Calu3 (cell line): ENCODE measurements at regions of chr15 and their contacts with region 1.

Region 1: GRCh38 chr15:87896936-87897335 is 359.6 kb downstream of the NTRK3 start:
- DNase-seq: no peak
- H3K4me3 Mint-ChIP-seq: no peak overlapping the region
- H3K27ac Mint-ChIP-seq: no peak overlapping the region
- H3K4me1 Mint-ChIP-seq: no peaks in the 10 kb centered on the region
- H3K27me3 Mint-ChIP-seq: no peaks in the 10 kb centered on the region
- CTCF ChIP-seq: no peak

Region 2: GRCh38 chr15:89690276-89691218 is 1793.6 kb after region 1 on chr15 and contains the starts of genes PEX11A and WDR93:
- CTCF ChIA-PET with region 1: no interaction called
- intact Hi-C with region 1: loop called (anchors 10 kb)
- DNase-seq: peak; percentile 92
- H3K4me3 Mint-ChIP-seq: peak within 1 kb of the TSS; percentile 96
- H3K27ac Mint-ChIP-seq: peak within 1 kb of the TSS; percentile 88
- H3K4me1 Mint-ChIP-seq: no peaks in the 10 kb centered on the region
- H3K27me3 Mint-ChIP-seq: peaks cover 13% of the 10 kb centered on the region
- CTCF ChIP-seq: no peak
- total RNA-seq, gene PEX11A: 6.7 and 8.0 TPM in 2 replicates
- total RNA-seq, gene WDR93: not detected in 2 replicates